Activated CD4-positive, alpha-beta memory T cell treated with anti-CD3 and anti-CD28 coated beads for 36 hours (primary cell): ENCODE measurements at regions of chr1 and their contacts with region 1.

Region 1: GRCh38 chr1:234570301-234570711 is 39.7 kb downstream of the IRF2BP2 start:
- DNase-seq: no peak
- H3K4me3 Mint-ChIP-seq: no peak overlapping the region
- H3K27ac Mint-ChIP-seq: no peak overlapping the region
- H3K4me1 Mint-ChIP-seq: no peaks in the 10 kb centered on the region
- H3K27me3 Mint-ChIP-seq: peaks cover 2% of the 10 kb centered on the region

Region 2: GRCh38 chr1:234589854-234590620 is 19.7 kb after region 1 on chr1:
- CTCF ChIA-PET with region 1: no interaction called
- POLR2A ChIA-PET with region 1: no interaction called
- intact Hi-C with region 1: loop called (anchors 2 kb)
- DNase-seq: no peak
- H3K4me3 Mint-ChIP-seq: no peak overlapping the region
- H3K27ac Mint-ChIP-seq: no peak overlapping the region
- H3K4me1 Mint-ChIP-seq: peaks cover 4% of the 10 kb centered on the region
- H3K27me3 Mint-ChIP-seq: peaks cover 2% of the 10 kb centered on the region

Region 3: DNA sequence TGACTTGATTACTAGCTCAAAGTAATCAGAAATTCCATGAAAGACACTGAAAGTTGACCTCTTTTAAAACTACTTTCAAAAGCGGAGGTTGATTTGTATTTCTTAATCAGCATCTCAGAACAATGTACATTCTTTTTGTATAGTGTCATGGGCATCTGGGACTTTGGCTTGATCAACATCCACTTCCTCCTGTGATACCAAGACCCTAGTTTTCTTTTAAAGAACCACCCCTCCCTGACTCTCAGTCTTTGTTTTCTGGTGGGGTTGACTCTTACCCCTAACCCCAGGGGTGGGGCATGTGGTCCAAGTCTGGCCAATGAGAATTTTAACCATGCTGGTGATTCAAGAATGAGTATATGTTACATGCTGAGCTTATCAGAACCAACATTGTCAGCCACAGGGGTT is 61.4 kb after region 1 on chr1:
- CTCF ChIA-PET with region 1: no interaction called
- POLR2A ChIA-PET with region 1: no interaction called
- intact Hi-C with region 1: no loop called
- DNase-seq: no peak
- H3K4me3 Mint-ChIP-seq: no peak overlapping the region
- H3K27ac Mint-ChIP-seq: no peak overlapping the region
- H3K4me1 Mint-ChIP-seq: peaks cover 5% of the 10 kb centered on the region
- H3K27me3 Mint-ChIP-seq: no peaks in the 10 kb centered on the region